Transverse colon (tissue), 4 donors: ENCODE measurements at regions of chrX and their contacts with region 1.

Region 1: DNA sequence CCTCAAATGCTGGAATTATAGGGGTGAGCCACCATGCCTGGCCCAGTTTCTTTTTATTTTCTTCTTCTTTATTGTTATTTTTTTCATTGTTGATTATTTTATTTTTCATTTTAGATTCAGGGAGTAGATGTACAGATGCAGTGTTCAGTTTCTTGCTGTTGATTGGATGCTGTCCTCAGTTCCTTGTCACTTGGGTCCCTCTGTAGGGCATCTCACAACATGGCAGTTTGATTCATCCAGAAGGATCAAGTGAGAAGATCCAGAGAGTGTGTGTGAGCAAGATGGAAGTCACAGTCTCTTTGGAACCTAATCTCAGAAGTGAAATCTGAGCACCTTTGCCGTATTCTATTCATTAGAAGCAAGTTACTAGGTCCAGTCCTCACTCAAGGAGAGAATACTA is 20.9 kb downstream of the HMGB3 start:
- DNase-seq: no peak
- H3K4me3 ChIP-seq: no peak overlapping the region
- H3K27ac ChIP-seq: no peak overlapping the region
- H3K4me1 ChIP-seq: no peaks in the 10 kb centered on the region
- H3K27me3 ChIP-seq: no peaks in the 10 kb centered on the region
- CTCF ChIP-seq: peak in 4 of 5 experiments; percentile 13 to 45 (median 17)
- EP300 ChIP-seq: no peak
- POLR2A ChIP-seq: no peak

Region 2: GRCh38 chrX:150913511-150913910 is 90.6 kb before region 1 on chrX:
- in situ Hi-C with region 1: loop called in 1 of 4 experiments (anchors 25 kb)
- intact Hi-C with region 1: no loop called
- DNase-seq: no peak
- H3K4me3 ChIP-seq: no peak overlapping the region
- H3K27ac ChIP-seq: no peak overlapping the region
- H3K4me1 ChIP-seq: no peaks in the 10 kb centered on the region
- H3K27me3 ChIP-seq: no peaks in the 10 kb centered on the region
- CTCF ChIP-seq: no peak
- EP300 ChIP-seq: no peak
- POLR2A ChIP-seq: no peak

Region 3: DNA sequence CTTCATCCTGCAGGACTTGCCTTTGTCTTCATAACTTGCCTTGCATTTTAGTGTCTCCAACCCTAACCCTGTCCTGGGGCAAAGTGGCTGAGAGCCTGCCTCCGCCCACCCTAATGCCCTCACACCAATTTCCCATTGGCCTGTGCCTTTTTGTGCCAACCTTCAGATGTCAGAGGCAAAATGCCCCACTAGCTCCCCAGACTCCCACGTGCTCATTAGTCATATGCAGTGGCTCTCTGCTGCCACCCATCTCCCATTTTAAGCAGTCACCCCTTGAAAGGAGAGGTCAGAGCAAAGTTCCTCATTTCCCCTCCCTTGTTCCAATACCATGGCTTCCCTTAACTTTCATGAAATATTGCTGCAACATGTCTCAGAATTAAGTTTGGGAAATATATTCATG is 484.6 kb after region 1 on chrX:
- in situ Hi-C with region 1: no loop called
- intact Hi-C with region 1: no loop called
- DNase-seq: no peak
- H3K4me3 ChIP-seq: no peak overlapping the region
- H3K27ac ChIP-seq: no peak overlapping the region
- H3K4me1 ChIP-seq: no peaks in the 10 kb centered on the region
- H3K27me3 ChIP-seq: no peaks in the 10 kb centered on the region
- CTCF ChIP-seq: no peak
- EP300 ChIP-seq: no peak
- POLR2A ChIP-seq: no peak